HepG2 (cell line): ENCODE measurements at regions of chr16 and their contacts with region 1.

Region 1: GRCh38 chr16:370443-370842 is at the start of gene MRPL28:
- DNase-seq: peak; percentile 90
- ATAC-seq: peak; percentile 89
- H3K4me3 ChIP-seq: peak within 1 kb of the TSS; percentile 57 to 79 (median 75)
- H3K27ac ChIP-seq: peak within 1 kb of the TSS; percentile 44
- H3K4me1 ChIP-seq: peaks cover 28% of the 10 kb centered on the region
- H3K27me3 ChIP-seq: no peaks in the 10 kb centered on the region
- CTCF ChIP-seq: no peak
- EP300 ChIP-seq: peak in 1 of 2 experiments; percentile 40; a peak in 2 of 4 replicates
- POLR2A ChIP-seq: peak in 1 of 2 experiments; percentile 53; a peak in 2 of 4 replicates
- RAD21 ChIP-seq: no peak
- total RNA-seq, gene MRPL28: 114 and 128 TPM in 2 replicates

Region 2: GRCh38 chr16:381789-382717 is 11.6 kb after region 1 on chr16 and contains the start of gene PGAP6:
- CTCF ChIA-PET with region 1: no interaction called
- POLR2A ChIA-PET with region 1: interaction called, 27 read pairs
- in situ Hi-C with region 1: no loop called
- intact Hi-C with region 1: no loop called
- DNase-seq: no peak
- ATAC-seq: no peak; the same call in 2 of the 3 replicates
- H3K4me3 ChIP-seq: peak within 1 kb of the TSS; percentile 87 to 94 (median 93)
- H3K27ac ChIP-seq: peak within 1 kb of the TSS; percentile 68
- H3K4me1 ChIP-seq: peaks cover 38% of the 10 kb centered on the region
- H3K27me3 ChIP-seq: no peaks in the 10 kb centered on the region
- CTCF ChIP-seq: no peak
- EP300 ChIP-seq: no peak
- POLR2A ChIP-seq: peak in 1 of 2 experiments; percentile 74; a peak in 2 of 4 replicates
- RAD21 ChIP-seq: 0 out of 2 replicates have a peak, but pooled peaks have one; percentile 8
- total RNA-seq, gene PGAP6: 33.7 and 52.7 TPM in 2 replicates

Region 3: DNA sequence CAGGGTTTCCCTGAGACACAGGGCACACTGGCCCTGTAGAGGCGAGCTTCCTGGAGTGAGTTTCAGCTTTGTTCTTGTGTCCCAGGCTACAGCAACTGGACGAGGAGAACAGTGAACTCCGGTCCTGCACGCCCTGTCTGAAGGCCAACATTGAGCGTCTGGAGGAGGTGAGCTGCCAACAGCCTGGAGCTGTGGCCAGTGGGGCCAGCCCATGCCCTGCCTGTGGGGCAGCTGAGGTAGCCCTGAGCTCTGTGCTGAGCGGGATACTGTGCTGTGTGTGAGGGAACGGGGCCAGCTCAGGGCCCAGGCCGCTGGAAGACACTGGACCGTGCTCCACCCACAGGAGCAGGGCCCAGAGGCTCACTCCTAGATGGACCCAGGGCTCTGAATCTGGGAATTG is 148.4 kb after region 1 on chr16:
- CTCF ChIA-PET with region 1: no interaction called
- POLR2A ChIA-PET with region 1: no interaction called
- in situ Hi-C with region 1: no loop called
- intact Hi-C with region 1: no loop called
- DNase-seq: no peak
- ATAC-seq: no peak
- H3K4me3 ChIP-seq: no peak overlapping the region
- H3K27ac ChIP-seq: no peak overlapping the region
- H3K4me1 ChIP-seq: peaks cover 4% of the 10 kb centered on the region; the same call in 1 of the 2 replicates
- H3K27me3 ChIP-seq: no peaks in the 10 kb centered on the region
- CTCF ChIP-seq: no peak
- EP300 ChIP-seq: no peak
- POLR2A ChIP-seq: 0 out of 4 replicates have a peak, but pooled peaks of 1 of the 2 experiments have one; percentile 34
- RAD21 ChIP-seq: no peak